Heart left ventricle (tissue), 16 donors: ENCODE measurements at regions of chr1 and their contacts with region 1.

Region 1: GRCh38 chr1:99544328-99544727 is 101.6 kb upstream of the PALMD start:
- DNase-seq: no peak
- ATAC-seq: no peak
- H3K4me3 ChIP-seq: no peak overlapping the region
- H3K27ac ChIP-seq: no peak overlapping the region
- H3K4me1 ChIP-seq: peaks cover 1 to 12% (median 7%) of the 10 kb centered on the region in 12 donors
- H3K27me3 ChIP-seq: no peaks in the 10 kb centered on the region
- CTCF ChIP-seq: no peak
- POLR2A ChIP-seq: no peak

Region 2: GRCh38 chr1:99580451-99580850 is 36.1 kb after region 1 on chr1:
- intact Hi-C with region 1: loop called in 2 of 10 experiments (anchors 5 kb)
- DNase-seq: peak in 3 of 5 donors; percentile 49 to 61 (median 49)
- ATAC-seq: peak; percentile 37 to 97 (median 85)
- H3K4me3 ChIP-seq: no peak overlapping the region
- H3K27ac ChIP-seq: peak overlapping the region in 8 of 12 donors; percentile 7 to 54 (median 28)
- H3K4me1 ChIP-seq: peaks cover 0 to 5% (median 0%) of the 10 kb centered on the region in 12 donors
- H3K27me3 ChIP-seq: no peaks in the 10 kb centered on the region
- CTCF ChIP-seq: peak in 1 of 12 donors; percentile 9
- POLR2A ChIP-seq: no peak

Region 3: DNA sequence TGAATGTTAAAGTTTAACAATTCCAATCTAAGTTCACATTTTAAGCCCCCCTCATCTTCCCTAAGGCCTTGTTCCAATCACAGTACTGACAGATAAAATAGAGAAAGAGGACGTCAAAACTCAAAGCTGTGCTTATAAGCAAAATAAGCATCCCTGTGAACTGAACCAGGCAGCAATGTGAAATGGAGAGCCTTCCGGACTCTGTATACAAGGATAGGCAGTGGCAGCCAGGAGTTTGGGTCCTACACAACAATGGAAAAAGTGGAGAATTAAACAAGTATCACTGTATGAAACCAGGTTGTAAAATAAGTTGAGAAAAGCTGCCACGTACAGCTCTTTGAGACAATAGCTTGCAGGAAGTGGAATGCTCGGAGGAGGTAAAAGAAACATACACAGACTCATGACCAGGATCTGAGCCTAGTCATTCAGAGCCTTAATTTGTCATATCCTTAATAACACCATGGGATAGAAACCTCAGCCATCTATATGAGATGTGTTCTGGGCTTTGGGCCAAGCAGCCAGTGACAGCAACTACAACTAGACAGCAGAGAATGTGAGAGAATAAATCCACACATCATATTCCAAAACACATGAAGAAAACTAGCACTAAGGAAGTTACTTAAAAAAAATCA is 46.4 kb after region 1 on chr1:
- intact Hi-C with region 1: loop called in 1 of 10 experiments (anchors 5 kb)
- DNase-seq: peak in 4 of 5 donors; percentile 52 to 61 (median 60)
- ATAC-seq: peak; percentile 73 to 93 (median 83)
- H3K4me3 ChIP-seq: no peak overlapping the region
- H3K27ac ChIP-seq: peak overlapping the region in 9 of 12 donors; percentile 2 to 81 (median 50)
- H3K4me1 ChIP-seq: peaks cover 0 to 27% (median 10%) of the 10 kb centered on the region in 12 donors
- H3K27me3 ChIP-seq: no peaks in the 10 kb centered on the region
- CTCF ChIP-seq: no peak
- POLR2A ChIP-seq: no peak